Heart right ventricle (tissue), 16 donors: ENCODE measurements at regions of chr4 and their contacts with region 1.

Region 1: GRCh38 chr4:80678413-80678812 is 342.9 kb downstream of the CFAP299 start:
- DNase-seq: no peak
- ATAC-seq: no peak
- H3K4me3 ChIP-seq: no peak overlapping the region
- H3K27ac ChIP-seq: no peak overlapping the region
- H3K4me1 ChIP-seq: no peaks in the 10 kb centered on the region
- H3K27me3 ChIP-seq: no peaks in the 10 kb centered on the region
- CTCF ChIP-seq: no peak

Region 2: GRCh38 chr4:79757600-79757999 is 920.8 kb before region 1 on chr4:
- intact Hi-C with region 1: no loop called
- DNase-seq: no peak
- ATAC-seq: no peak
- H3K4me3 ChIP-seq: no peak overlapping the region
- H3K27ac ChIP-seq: no peak overlapping the region
- H3K4me1 ChIP-seq: no peaks in the 10 kb centered on the region
- H3K27me3 ChIP-seq: no peaks in the 10 kb centered on the region
- CTCF ChIP-seq: no peak

Region 3: GRCh38 chr4:81982846-81983540 is 1304.6 kb after region 1 on chr4:
- intact Hi-C with region 1: loop called in 1 of 10 experiments (anchors 5 kb)
- DNase-seq: no peak
- ATAC-seq: no peak
- H3K4me3 ChIP-seq: no peak overlapping the region
- H3K27ac ChIP-seq: no peak overlapping the region
- H3K4me1 ChIP-seq: no peaks in the 10 kb centered on the region
- H3K27me3 ChIP-seq: peaks cover 0 to 5% (median 0%) of the 10 kb centered on the region in 7 donors
- CTCF ChIP-seq: no peak